ENCODE measurements at regions of chr7 and their contacts with region 1.

Region 1: GRCh38 chr7:44735403-44736165 is 13.1 kb upstream of the ZMIZ2 start:
- DNase-seq: no peak
- H3K4me3 Mint-ChIP-seq: no peak overlapping the region
- H3K27ac Mint-ChIP-seq: peak overlapping the region; percentile 89
- H3K4me1 Mint-ChIP-seq: peaks cover 11% of the 10 kb centered on the region
- H3K27me3 Mint-ChIP-seq: no peaks in the 10 kb centered on the region

Region 2: DNA sequence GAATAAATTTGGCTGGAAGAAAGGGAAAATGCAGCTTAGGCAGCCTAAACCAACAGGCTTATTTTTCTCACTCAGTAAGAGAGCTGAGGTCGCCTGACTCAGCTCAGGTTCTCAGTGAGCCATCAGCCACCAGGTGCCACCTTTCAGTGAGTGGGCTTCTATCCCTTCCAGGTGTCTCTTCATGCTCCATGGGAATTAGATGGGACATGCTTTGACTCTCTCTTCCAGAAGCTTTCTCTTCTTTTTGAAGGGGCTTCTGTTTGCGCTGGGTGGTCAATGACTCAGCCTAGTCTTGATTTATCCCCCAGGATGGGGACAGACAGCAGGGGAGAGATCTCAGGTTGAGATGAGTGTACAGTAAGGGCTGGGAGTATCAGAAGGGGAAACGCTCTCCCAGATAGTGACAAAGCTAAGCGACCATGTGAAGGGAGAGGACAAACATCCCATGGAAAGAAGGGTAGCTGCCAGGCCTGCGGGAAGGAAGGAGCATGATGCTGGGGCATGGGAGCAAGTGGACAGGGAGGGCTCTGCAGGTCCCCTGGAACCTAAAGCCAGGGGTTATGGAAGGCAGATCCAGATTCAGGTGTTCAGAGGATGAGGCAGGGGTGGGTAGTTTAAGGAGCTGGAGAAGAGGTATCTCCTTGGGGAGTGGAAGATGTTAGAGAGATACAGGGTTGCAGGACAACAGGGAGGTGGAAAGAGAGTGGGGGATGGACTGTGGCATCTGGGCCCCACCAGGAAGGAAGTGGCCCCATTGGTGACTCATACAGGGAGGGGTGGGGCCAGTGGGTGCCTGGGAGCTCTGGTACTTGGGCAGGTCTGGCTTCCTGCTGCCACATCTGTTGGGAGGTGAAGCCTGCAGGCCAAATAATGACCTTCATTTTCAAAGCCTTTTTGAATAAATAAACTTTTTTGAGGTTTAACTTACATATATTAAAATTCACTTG is 96.7 kb before region 1 on chr7:
- intact Hi-C with region 1: loop called (anchors 1 kb)
- DNase-seq: peak; percentile 84
- H3K4me3 Mint-ChIP-seq: peak overlapping the region; percentile 79
- H3K27ac Mint-ChIP-seq: peak overlapping the region; percentile 99
- H3K4me1 Mint-ChIP-seq: peaks cover 70% of the 10 kb centered on the region
- H3K27me3 Mint-ChIP-seq: no peaks in the 10 kb centered on the region

Region 3: DNA sequence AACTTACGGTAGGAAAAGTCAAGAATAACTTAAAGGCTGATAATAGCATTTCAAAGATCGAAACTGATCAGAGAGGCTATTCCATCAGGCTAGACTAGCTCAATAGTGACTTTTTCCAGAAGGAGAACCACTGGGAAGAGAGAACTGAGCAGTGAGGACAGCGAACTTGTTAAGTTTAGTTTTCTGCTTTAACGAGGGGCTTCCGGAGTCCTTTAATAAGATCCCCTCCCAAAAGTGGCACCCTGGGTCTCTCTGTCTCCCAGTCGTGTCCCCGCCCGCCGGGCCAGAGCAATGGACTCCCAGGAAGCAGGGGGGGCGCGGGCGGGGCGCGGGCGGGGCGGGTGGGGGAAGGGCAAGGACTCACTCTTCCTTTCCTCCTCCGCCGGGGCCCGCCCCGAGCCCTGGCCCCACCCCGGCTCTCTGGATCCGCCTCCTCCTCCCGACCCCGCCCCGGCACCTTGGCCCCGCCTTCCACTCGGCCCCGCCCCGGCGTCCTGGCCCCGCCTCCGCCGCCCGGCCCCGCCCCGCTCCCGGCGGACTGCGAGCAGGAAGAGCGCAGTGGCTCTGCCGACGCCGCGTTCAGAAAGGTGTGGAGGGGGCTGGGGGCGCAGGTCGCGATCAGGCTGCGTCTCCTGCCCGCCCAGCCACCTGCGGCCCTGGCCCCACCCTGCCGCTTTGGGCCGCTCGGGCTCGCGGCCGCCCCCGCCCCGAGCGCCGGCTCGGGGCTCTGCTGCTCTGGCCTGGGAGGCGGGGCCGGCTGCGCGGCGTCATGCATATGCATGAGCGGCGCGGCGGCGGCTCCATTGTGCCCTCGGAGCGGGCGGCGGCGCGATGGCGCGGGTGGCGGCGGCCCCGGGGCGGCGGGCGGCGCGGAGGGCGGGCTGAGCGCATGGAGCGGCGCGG is 12.7 kb after region 1 on chr7 and contains the start of gene ZMIZ2:
- intact Hi-C with region 1: loop called (anchors 1 kb)
- DNase-seq: peak; percentile 87
- H3K4me3 Mint-ChIP-seq: peak within 1 kb of the TSS; percentile 85
- H3K27ac Mint-ChIP-seq: peak within 1 kb of the TSS; percentile 94
- H3K4me1 Mint-ChIP-seq: peaks cover 31% of the 10 kb centered on the region
- H3K27me3 Mint-ChIP-seq: no peaks in the 10 kb centered on the region
- total RNA-seq, gene ZMIZ2: 105 TPM in 2 replicates